ENCODE measurements at regions of chr11 and their contacts with region 1.

Region 1: DNA sequence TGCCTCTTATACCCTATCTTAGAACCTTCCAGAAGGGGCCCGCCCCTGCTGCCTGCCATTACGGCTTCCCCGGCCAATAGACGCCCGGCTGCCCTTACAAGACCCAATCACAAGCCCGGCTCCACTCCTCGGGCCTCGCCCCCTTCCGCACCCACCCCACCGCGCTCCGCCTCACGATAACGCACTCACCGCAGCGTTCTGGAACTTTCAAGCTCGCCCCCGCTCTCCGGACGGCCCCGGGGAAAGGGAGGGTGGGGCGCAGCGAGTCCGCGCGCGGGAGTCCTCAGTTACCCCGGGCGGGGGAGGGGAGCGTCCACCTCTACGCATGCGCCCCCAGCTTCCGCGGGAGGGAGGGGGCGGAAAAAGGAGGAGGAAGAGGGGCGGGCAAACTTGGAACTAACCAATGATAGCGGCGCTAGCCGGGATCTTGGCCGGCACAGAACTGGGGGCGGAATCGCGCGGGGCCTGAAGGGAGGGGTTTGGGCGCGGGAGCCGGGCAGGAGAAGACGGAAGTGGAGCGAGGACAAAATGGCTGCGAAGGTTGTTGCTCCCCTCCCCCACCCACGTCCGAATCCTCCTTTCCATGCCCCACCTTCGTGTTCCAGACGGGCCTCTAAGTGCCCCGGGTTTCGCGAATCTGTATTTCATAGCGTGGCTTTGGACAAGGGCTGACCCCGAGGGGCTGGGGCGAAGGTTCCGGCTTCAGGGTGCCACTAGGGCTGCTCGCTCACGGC is 389 bp upstream of the HSPA8 start:
- DNase-seq: peak; percentile 100
- ATAC-seq: peak; percentile 85
- H3K4me3 ChIP-seq: peak overlapping the region; percentile 86
- H3K27ac ChIP-seq: peak overlapping the region; percentile 95
- H3K4me1 ChIP-seq: peaks cover 5% of the 10 kb centered on the region
- H3K27me3 ChIP-seq: no peaks in the 10 kb centered on the region
- CTCF ChIP-seq: no peak
- POLR2A ChIP-seq: no peak
- RAD21 ChIP-seq: no peak

Region 2: GRCh38 chr11:123046473-123047259 is 15.7 kb before region 1 on chr11:
- CTCF ChIA-PET with region 1: no interaction called
- POLR2A ChIA-PET with region 1: no interaction called
- dilution Hi-C with region 1: no loop called
- in situ Hi-C with region 1: no loop called
- intact Hi-C with region 1: no loop called
- DNase-seq: no peak
- ATAC-seq: no peak
- H3K4me3 ChIP-seq: no peak overlapping the region
- H3K27ac ChIP-seq: no peak overlapping the region
- H3K4me1 ChIP-seq: no peaks in the 10 kb centered on the region
- H3K27me3 ChIP-seq: peaks cover 11% of the 10 kb centered on the region
- CTCF ChIP-seq: no peak
- POLR2A ChIP-seq: no peak
- RAD21 ChIP-seq: no peak

Region 3: GRCh38 chr11:123253911-123254310 is 191.6 kb after region 1 on chr11:
- CTCF ChIA-PET with region 1: no interaction called
- POLR2A ChIA-PET with region 1: interaction called, 12 read pairs
- dilution Hi-C with region 1: no loop called
- in situ Hi-C with region 1: no loop called
- intact Hi-C with region 1: no loop called
- DNase-seq: peak; percentile 87
- ATAC-seq: peak; percentile 81
- H3K4me3 ChIP-seq: no peak overlapping the region
- H3K27ac ChIP-seq: peak overlapping the region; percentile 28; the same call in 1 of the 2 replicates
- H3K4me1 ChIP-seq: peaks cover 23% of the 10 kb centered on the region
- H3K27me3 ChIP-seq: no peaks in the 10 kb centered on the region; the same call in 1 of the 2 replicates
- CTCF ChIP-seq: no peak
- POLR2A ChIP-seq: no peak
- RAD21 ChIP-seq: no peak

Region 4: DNA sequence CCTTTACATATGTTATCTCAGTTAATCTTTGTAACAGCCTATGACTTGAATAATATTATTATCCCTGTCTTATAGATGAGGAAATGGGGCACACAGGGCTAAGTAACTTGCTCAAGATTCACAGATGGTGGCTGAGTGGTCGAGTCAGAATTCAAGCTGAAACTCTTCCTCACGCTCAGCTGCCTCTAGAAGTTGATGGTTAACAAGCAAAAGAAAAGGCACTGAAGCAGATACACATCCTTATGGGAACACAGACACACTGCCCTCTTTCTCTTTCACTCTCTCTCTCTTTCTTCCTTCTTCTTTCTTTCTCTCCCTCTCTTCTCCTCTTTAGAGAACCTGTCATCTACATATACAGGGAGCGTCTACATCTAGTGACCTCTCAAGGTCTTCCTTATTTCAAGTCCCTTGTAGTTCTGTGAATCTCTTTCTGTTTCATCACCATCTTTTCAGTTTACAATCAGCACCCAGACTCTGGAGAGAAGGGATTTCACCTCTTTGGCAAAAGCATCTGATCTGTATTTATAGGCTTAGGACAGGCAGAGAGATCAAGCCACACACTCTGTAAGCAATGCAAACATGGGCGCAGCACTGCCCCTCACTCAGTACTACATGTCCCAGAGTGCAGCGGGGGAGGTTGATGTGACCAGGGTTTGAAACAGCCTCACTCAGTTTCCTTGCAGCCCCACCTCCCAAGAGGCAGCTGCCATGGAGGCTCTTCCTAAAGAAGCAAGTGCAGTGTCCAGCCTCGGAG is 443.4 kb after region 1 on chr11:
- CTCF ChIA-PET with region 1: interaction called, 12 read pairs
- POLR2A ChIA-PET with region 1: no interaction called
- dilution Hi-C with region 1: no loop called
- in situ Hi-C with region 1: no loop called
- intact Hi-C with region 1: no loop called
- DNase-seq: no peak
- ATAC-seq: 0 out of 2 replicates have a peak, but pooled peaks have one; percentile 12
- H3K4me3 ChIP-seq: no peak overlapping the region
- H3K27ac ChIP-seq: no peak overlapping the region
- H3K4me1 ChIP-seq: peaks cover 6% of the 10 kb centered on the region; the same call in 1 of the 2 replicates
- H3K27me3 ChIP-seq: no peaks in the 10 kb centered on the region
- CTCF ChIP-seq: no peak
- POLR2A ChIP-seq: no peak
- RAD21 ChIP-seq: no peak

Measured in IMR-90 (cell line).